Activated naive CD4-positive, alpha-beta T cell treated with anti-CD3 and anti-CD28 coated beads for 36 hours (primary cell): ENCODE measurements at regions of chr6 and their contacts with region 1.

Region 1: DNA sequence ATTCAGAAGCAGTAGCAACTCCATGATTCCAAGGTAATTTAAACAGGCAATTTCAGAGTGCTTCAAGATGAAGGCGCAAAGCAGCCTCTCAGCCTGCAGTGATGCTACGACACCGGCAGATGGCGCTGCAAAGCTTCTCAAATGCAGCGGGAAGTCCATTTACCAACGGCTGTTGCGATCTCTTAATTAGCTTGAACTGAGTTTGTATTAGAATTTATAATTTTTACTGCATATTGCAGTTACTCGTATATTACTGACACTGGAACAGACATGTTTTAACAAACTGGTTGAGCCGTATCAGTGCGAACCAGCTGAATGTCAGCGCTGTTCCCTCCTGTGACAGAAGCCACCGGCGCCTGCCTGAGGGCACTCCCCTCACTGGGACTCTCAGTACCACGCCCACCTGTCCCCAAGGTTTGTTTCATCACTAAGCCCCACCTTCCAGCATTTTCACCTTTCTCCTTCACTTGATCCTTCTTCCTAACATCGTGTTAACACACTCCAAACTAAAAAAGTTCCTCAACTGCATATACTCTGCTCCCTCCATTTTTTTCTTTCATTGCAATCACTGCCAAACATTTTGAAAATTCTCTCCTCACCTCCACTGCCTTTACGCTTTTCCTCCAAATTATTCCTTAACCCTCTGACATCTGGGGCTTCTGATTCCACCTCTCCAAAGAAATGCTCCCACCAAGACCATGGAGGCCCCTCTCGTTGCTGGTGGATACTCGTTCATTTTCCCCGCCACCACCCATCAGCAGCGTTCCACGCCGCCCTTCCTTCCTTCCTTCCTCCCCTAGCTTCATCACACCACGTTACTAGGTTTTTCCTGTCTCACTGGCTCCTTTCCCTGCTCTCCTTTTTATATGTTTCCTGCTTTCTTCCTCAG is 14.5 kb downstream of the GNL1 start:
- DNase-seq: peak; percentile 89
- H3K4me3 Mint-ChIP-seq: peak overlapping the region; percentile 71
- H3K27ac Mint-ChIP-seq: peak overlapping the region; percentile 20
- H3K4me1 Mint-ChIP-seq: peaks cover 41% of the 10 kb centered on the region
- H3K27me3 Mint-ChIP-seq: no peaks in the 10 kb centered on the region

Region 2: DNA sequence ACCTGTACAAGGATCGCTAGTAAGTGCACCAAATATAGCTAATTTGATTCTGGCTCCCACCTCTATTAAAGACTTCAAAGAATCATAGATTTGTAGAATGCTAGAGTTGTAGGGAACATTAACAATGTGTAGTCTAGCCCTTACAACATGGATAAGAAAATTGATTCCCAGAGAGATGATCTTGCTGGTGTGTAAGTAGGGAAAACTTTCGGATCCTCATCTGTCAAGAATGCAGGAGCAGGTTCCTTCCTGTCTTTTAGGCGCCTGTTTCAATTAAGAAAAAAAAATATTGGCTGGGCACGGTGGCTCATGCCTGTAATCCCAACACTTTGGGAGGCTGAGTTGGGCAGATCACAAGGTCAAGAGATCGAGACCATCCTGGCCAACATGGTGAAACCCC is 453.9 kb before region 1 on chr6:
- CTCF ChIA-PET with region 1: no interaction called
- intact Hi-C with region 1: no loop called
- DNase-seq: no peak
- H3K4me3 Mint-ChIP-seq: no peak overlapping the region
- H3K27ac Mint-ChIP-seq: no peak overlapping the region
- H3K4me1 Mint-ChIP-seq: no peaks in the 10 kb centered on the region
- H3K27me3 Mint-ChIP-seq: peaks cover 9% of the 10 kb centered on the region

Region 3: DNA sequence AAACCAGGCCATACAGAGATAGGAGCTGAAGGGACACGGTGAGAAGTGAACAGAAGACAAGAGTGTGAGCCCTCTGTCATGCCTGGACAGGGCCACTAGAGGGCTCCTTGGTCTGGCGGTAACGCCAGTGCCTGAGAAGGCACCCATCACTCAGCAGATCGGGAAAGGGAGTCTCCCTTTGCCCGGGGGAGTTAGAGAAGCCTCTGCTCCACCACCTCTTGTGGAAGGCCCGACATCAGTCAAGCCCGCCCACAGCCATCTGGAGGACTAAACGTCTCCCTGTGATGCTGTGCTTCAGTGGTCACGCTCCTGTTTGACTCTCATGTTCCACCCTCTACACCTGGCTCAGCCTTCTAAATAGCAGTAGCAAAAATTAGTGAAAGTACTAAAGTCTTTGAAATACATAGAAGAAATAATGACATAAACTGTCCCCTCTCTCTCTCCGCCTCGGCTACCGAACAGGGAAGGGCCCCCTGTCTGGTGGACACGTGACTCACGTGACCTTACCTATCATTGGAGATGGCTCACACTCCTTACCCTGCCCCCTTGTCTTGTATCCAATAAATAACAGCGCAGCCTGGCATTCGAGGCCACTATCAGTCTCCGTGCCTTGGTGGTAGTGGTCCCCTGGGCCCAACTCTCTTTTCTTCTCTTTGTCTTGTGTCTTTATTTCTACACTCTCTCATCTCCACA is 130.1 kb before region 1 on chr6:
- CTCF ChIA-PET with region 1: no interaction called
- intact Hi-C with region 1: loop called (anchors 5 kb)
- DNase-seq: peak; percentile 76
- H3K4me3 Mint-ChIP-seq: peak overlapping the region; percentile 38
- H3K27ac Mint-ChIP-seq: no peak overlapping the region
- H3K4me1 Mint-ChIP-seq: peaks cover 5% of the 10 kb centered on the region
- H3K27me3 Mint-ChIP-seq: peaks cover 23% of the 10 kb centered on the region

Region 4: DNA sequence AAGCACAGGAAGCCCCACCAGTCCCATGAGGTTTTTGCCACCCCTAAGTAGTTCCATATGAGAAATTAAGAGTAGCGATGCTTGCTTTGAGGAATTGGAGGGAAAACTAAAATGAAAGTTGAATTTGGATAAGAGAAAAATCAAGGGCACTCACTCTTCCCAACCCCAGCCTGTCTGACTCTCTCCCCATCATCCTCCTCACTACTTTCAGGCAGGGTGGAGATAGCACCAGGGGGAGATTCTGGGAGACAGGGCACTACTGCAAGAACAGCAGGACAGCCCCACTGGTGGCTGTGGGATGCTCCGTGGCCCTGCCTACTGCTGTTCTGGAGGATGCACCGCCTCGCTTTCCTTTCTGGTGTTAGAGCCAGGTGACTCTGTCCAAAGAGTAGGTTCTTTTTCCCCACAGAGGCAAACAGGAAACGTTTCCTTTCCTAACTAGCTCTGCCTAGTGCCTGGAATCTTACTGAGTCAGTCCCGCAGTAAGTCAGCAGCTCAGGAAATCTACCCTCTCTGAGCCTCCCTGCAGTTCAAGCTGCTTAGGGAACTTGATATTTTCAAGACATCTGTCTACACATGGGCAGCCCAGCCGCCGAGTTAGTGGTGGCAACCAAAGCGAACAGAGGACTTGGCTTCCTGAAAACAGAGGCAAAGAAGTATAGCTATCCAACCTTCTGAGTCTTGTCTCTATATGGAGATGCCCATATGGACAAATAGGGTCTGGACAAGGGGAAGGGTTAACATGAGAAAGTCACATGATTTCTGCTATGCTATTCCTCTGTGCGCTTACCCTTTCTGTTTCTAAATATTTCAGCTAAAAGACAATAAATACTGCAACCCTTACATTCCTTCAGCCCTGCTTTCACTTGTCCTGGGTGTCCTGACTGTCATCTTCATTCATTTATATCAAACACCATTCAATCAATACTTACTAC is 41.1 kb before region 1 on chr6:
- CTCF ChIA-PET with region 1: interaction called, 112 read pairs
- intact Hi-C with region 1: loop called (anchors 1 kb)
- DNase-seq: peak; percentile 50
- H3K4me3 Mint-ChIP-seq: peak overlapping the region; percentile 67
- H3K27ac Mint-ChIP-seq: peak overlapping the region; percentile 87
- H3K4me1 Mint-ChIP-seq: peaks cover 57% of the 10 kb centered on the region
- H3K27me3 Mint-ChIP-seq: no peaks in the 10 kb centered on the region

Region 5: GRCh38 chr6:30590994-30591393 is 49.2 kb after region 1 on chr6:
- CTCF ChIA-PET with region 1: interaction called, 39 read pairs
- intact Hi-C with region 1: no loop called
- DNase-seq: no peak
- H3K4me3 Mint-ChIP-seq: no peak overlapping the region
- H3K27ac Mint-ChIP-seq: peak overlapping the region; percentile 75
- H3K4me1 Mint-ChIP-seq: peaks cover 8% of the 10 kb centered on the region
- H3K27me3 Mint-ChIP-seq: no peaks in the 10 kb centered on the region

Region 6: DNA sequence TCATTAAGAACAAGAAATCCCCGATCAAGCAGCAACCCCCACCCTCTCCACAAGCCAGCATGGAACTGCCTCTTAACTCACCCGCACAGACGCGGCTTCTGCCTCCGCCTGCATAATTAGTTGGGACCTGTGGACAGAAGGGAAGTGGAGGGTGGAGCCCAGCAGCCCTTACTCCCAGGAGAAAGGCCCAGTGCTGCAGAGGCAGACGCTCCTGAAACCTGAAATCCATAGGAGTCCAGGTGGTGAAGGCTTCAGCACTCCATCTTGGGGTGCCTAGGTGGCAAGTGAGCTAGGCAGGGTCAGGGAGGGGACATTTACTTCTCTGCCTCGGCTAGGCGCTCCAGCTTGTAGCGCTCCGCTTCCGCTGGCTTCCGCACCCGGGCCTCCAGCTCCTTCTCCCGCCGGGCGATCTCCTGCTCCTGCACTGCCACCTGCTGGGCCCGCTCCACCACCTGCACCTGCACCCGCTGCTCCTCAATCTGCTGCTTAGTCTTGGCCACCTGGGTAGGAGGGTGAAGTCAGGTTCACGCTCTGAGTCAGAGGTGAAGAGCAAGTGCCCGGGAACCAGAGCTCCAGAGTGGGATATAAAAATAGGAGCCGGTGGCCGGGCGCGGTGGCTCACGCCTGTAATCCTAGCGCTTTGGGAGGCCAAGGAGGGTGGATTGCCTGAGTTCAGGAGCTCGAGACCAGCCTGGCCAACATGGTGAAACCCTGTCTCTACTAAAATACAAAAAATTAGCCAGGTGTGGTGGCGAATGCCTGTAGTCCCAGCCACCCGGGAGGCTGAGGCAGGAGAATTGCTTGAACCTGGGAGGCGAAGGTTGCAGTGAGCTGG is 189.1 kb after region 1 on chr6:
- CTCF ChIA-PET with region 1: interaction called, 16 read pairs
- intact Hi-C with region 1: loop called (anchors 1 kb)
- DNase-seq: peak; percentile 94
- H3K4me3 Mint-ChIP-seq: peak overlapping the region; percentile 29
- H3K27ac Mint-ChIP-seq: no peak overlapping the region
- H3K4me1 Mint-ChIP-seq: peaks cover 47% of the 10 kb centered on the region
- H3K27me3 Mint-ChIP-seq: no peaks in the 10 kb centered on the region

Region 7: DNA sequence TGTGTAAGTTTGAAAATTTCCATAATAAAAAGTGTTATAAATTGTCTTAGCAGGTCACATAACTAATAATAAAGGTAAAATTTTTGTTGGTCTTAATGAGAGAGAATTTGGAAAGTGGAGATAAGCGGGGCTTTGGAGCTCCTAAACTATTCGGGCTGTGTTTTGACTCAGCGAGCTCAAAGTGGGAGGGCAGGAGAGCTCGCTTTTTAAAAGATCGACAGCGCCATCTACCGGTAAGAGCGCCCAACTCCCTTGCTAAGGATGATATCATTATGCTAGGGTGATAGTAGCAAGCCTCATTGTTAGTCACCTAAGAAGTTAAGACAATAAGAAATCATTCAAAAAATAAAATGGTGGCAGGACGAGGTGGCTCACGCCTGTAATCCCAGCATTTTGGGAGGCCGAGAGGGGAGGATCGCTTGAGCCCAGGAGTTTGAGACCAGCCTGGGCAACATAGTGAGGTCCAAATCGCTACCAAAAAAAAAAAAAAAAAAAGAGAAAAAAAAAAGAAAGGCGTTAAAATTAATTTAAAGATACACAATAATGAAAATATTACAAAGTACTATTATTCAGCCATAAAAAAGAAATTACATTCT is 545.8 kb after region 1 on chr6:
- CTCF ChIA-PET with region 1: interaction called, 4 read pairs
- intact Hi-C with region 1: loop called (anchors 2 kb)
- DNase-seq: peak; percentile 95
- H3K4me3 Mint-ChIP-seq: no peak overlapping the region
- H3K27ac Mint-ChIP-seq: no peak overlapping the region
- H3K4me1 Mint-ChIP-seq: peaks cover 10% of the 10 kb centered on the region
- H3K27me3 Mint-ChIP-seq: no peaks in the 10 kb centered on the region